ENCODE measurements at regions of chr7 and their contacts with region 1.

Region 1: DNA sequence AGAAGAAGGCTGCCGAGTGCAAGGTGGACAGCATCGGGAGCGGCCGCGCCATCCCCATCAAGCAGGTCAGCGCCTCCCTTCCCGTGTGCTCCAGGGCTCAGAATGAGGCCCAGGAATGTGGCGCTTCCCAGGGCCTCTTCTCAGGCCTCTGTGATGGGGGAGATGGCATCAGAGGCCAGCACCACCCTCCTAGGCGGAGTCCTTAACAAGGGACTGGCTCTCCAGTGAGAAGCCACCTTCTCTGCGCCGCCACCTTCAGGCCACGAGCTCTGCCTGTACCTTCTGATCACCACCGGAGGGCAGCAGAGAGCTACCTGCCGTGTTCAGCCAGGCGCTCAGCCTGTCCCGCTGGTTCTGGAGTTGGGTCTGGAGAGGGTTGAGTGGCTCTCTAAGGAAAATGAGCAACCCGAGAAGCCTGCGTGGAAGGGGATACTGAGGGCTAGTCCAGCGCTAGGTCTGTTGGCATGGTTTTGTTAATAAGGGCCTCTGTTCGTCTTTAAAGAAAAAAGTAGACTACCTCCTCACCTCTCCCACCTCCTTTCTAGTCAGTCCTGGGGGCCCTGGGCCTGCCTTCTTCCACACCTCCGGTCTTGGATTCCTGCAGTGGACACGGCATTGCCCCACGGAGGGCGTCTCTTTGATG is 37.7 kb downstream of the AGAP3 start:
- DNase-seq: peak; percentile 88 to 89 (median 88)
- ATAC-seq: peak; percentile 90
- H3K4me3 ChIP-seq: no peak overlapping the region
- H3K27ac ChIP-seq: no peak overlapping the region
- H3K4me1 ChIP-seq: peaks cover 6% of the 10 kb centered on the region
- H3K27me3 ChIP-seq: no peaks in the 10 kb centered on the region
- CTCF ChIP-seq: peak; percentile 95 to 98 (median 98)
- POLR2A ChIP-seq: no peak

Region 2: DNA sequence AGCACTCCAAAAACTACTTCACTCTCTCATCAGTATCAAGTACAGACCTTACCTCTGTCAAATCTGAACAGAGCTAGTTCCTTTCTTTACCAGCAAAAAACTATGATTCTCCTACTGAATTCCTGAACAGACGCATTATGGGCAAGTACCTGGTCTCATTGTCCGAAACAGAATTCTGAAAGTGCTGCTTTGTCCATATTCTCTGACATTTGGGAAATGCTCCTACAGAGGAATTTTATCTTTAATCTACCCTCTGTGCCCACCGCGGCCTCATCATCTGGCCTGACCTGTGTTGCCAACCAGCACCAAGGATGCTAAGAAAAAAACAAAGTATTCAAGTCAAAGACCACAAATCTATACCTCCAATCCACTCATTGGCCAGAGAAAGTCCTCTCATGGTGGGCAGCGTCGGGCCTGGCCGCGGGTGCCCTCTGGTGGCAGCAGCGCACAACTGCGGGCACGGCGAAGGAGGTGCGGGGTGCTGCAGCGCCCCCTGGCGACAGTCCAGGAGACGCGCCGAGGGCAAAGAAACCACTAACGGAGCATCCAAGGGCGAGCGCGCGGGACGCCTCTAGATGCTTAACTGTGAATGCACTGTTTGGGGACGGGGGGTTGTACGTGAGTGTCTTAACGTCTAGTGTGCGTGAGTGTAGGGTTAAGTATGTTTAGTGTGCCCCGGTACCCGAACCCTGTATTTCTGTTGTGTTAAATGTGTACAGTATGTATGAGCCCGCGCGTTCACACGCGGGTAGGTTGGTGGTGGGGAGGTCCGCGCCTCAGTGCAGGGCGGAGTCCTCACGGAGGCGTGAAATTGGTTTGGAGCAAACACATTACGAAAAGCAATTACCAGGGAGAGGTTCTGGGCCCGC is 48.6 kb after region 1 on chr7:
- intact Hi-C with region 1: loop called (anchors 2 kb)
- DNase-seq: peak; percentile 74 to 83 (median 79)
- ATAC-seq: peak; percentile 86
- H3K4me3 ChIP-seq: no peak overlapping the region
- H3K27ac ChIP-seq: no peak overlapping the region
- H3K4me1 ChIP-seq: peaks cover 10% of the 10 kb centered on the region
- H3K27me3 ChIP-seq: peaks cover 0 to 17% of the 10 kb centered on the region in 2 donors
- CTCF ChIP-seq: peak; percentile 100
- POLR2A ChIP-seq: no peak

Region 3: GRCh38 chr7:151271699-151272355 is 147.9 kb after region 1 on chr7:
- intact Hi-C with region 1: no loop called
- DNase-seq: peak in 3 of 4 donors; percentile 63 to 81 (median 66)
- ATAC-seq: peak; percentile 86
- H3K4me3 ChIP-seq: no peak overlapping the region
- H3K27ac ChIP-seq: peak overlapping the region; percentile 33 to 66 (median 54)
- H3K4me1 ChIP-seq: peaks cover 20% of the 10 kb centered on the region
- H3K27me3 ChIP-seq: no peaks in the 10 kb centered on the region
- CTCF ChIP-seq: no peak
- POLR2A ChIP-seq: no peak

Region 4: GRCh38 chr7:151304856-151305255 is 180.9 kb after region 1 on chr7:
- intact Hi-C with region 1: loop called (anchors 10 kb)
- DNase-seq: no peak
- ATAC-seq: no peak
- H3K4me3 ChIP-seq: no peak overlapping the region
- H3K27ac ChIP-seq: no peak overlapping the region
- H3K4me1 ChIP-seq: peaks cover 9% of the 10 kb centered on the region
- H3K27me3 ChIP-seq: peaks cover 0 to 3% of the 10 kb centered on the region in 2 donors
- CTCF ChIP-seq: no peak
- POLR2A ChIP-seq: no peak